Transverse colon (tissue), 4 donors: ENCODE measurements at regions of chr7 and their contacts with region 1.

Region 1: DNA sequence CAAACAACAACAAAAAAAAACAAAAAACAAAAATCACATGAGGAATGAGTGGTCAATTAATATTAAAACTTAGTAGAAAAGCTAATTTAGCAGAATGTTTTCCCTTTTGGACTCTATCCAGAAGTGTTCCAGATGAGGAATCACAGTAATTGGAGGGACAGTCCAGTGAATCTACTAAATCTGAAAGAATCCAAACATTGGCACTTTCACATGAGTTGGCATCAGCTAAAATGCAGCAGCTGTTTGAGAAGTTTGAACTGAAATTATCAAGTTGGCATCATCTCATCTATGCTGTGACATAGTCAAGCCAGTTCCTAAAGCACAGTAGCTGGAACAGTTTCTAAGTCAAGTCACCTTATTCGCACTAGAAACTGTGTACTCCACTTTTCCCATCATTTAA is 367.8 kb downstream of the PPP1R3A start:
- DNase-seq: no peak
- H3K4me3 ChIP-seq: no peak overlapping the region
- H3K27ac ChIP-seq: no peak overlapping the region
- H3K4me1 ChIP-seq: no peaks in the 10 kb centered on the region
- H3K27me3 ChIP-seq: no peaks in the 10 kb centered on the region
- CTCF ChIP-seq: no peak
- EP300 ChIP-seq: no peak
- POLR2A ChIP-seq: no peak

Region 2: GRCh38 chr7:115070311-115070710 is 1519.3 kb after region 1 on chr7:
- in situ Hi-C with region 1: no loop called
- intact Hi-C with region 1: loop called (anchors 5 kb)
- DNase-seq: no peak
- H3K4me3 ChIP-seq: no peak overlapping the region
- H3K27ac ChIP-seq: no peak overlapping the region
- H3K4me1 ChIP-seq: no peaks in the 10 kb centered on the region
- H3K27me3 ChIP-seq: no peaks in the 10 kb centered on the region
- CTCF ChIP-seq: no peak
- EP300 ChIP-seq: no peak
- POLR2A ChIP-seq: no peak